Sciatic nerve (tissue), 2 donors: ENCODE measurements at regions of chr16 and their contacts with region 1.

Region 1: DNA sequence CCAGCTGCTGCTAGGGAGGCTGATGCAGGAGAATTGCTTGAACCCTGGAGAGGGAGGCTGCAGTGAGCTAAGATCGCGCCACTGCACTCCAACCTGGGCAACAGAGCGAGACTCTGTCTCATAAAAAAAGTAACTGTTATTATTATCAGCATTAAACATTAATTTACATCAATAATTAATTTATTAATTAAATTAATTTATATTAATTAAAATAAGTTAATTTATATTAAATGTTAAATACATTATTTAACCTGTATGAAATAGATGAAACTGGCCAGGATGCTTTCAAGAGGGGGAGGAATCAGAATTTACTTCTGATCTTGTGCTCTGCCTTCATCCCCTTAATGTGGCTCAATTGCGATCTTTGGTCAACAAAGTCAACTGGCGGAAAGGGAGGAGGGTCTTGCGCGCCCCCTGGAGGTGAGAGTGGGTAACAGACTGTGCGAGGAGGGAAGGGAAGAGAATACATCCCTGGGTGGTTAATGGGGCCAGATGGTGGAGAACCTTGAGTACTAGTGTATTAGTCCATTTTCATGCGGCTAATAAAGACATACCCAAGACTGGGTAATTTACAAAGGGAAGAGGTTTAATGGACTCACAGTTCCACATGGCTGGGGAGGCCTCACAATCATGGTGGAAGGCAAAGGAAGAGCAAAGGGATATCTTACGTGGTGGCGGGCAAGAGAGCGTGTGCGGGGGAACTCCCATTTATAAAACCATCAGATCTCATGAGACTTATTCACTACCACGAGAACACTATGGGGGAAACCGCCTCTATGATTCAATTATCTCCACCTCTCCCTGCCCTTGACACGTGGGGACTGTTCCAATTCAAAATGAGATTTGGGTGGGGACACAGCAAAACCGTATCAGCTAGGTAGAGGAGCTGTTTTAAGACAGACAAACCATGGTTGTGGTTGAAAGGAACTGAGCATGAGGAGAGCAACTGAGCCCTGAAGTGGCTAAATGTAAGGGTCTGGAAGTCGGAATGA is 15.7 kb upstream of the CPPED1 start:
- DNase-seq: peak; percentile 83
- ATAC-seq: peak; percentile 66

Region 2: GRCh38 chr16:12323007-12323758 is 496.2 kb before region 1 on chr16:
- intact Hi-C with region 1: no loop called
- DNase-seq: no peak
- ATAC-seq: no peak

Region 3: DNA sequence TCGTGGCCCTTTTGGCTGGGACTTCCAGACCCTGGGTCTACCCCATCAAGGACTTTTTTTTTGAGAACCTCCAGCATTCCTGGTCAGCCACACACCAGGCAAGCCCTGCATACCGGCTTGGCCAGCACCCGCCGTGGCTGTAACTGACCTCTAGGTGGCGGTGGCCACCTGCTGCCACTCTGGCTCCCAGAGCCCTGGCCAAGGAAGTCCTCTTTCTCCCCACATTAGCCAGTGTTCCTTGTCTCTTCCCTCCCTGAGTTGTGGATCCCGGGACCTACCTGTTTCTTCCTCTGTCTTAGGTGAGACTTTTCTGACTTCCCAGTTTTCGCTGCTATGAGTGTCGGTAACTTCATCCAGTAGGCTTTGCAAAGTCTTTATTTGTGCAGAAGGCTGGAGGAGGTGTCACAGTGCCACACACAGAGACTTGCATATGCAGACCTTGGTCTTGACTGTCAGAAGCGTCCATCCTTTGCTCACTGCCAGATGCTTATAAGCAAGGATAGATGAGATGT is 364.1 kb before region 1 on chr16:
- intact Hi-C with region 1: loop called (anchors 10 kb)
- DNase-seq: peak; percentile 72
- ATAC-seq: peak; percentile 74

Region 4: GRCh38 chr16:12529582-12529981 is 289.8 kb before region 1 on chr16:
- intact Hi-C with region 1: loop called (anchors 2 kb)
- DNase-seq: no peak
- ATAC-seq: no peak

Region 5: DNA sequence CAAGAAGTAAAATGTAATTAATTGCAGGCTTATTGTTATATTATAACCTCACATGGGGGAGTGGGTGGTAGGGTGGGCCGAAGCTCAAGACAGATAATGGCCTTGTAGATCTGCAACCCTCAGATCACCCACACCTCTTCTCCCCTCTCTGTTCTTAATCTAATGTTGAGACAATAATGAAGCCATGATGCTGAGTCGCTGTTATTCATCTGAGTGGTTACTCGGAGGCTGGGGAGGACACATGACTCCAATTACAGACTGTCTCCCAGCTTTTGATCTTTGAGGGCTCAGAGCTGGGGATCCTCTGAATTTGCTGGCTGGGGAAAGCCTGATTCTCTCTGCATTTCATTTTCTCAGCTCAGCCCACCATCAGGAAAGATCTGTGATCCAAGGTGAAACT is 357.3 kb after region 1 on chr16:
- intact Hi-C with region 1: no loop called
- DNase-seq: no peak
- ATAC-seq: no peak